Right ventricle myocardium superior (tissue), 1 donor: ENCODE measurements at regions of chr22 and their contacts with region 1.

Region 1: DNA sequence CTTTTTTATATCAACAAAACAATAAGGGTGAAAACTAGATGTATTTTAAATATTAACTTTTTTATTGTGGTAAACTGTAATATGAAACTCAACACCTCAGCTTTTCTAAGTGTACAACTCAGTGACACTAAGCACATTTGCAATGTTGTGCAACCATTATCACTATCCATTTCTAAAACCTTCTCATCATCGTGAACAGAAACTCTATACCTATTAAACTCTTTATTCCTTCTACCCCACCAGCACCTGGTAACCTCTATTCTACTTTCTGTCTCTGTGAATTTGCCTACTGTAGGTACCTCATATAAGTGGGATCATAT is 9.4 kb downstream of the HORMAD2 start:
- DNase-seq: no peak
- ATAC-seq: no peak

Region 2: GRCh38 chr22:29633514-29634312 is 455.9 kb before region 1 on chr22:
- intact Hi-C with region 1: loop called (anchors 5 kb)
- DNase-seq: no peak
- ATAC-seq: no peak

Region 3: DNA sequence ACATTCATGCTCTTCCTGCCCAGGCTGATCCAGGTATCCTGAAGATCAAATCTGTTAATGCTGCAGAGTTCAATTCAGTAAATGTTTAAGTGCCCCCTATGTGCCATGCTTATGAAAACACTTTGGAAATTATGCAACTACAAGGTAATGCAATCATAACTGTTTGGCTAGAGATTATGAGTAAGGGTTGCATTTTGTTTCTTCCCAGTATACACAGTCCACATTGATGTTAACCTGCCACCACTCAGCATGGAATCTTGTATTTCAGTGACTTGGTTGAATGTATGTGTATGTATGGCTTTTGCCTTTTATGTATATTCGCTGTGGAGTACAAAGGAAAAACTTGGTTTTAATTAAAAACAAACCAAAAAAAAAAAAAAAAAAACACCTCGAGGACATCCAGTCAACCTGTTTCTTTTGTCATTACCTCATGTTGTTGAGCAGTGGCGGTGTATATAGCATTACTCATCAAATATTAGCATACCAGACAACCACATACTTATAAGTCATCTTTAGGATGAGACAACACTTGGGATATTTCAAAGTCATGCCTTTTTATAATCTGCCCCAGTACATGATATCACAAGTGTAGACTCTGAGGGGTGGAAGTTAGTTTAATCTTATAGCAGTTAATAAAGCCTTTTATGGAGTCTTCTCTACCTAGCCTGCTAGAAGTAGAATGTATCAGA is 95.4 kb before region 1 on chr22:
- intact Hi-C with region 1: no loop called
- DNase-seq: no peak
- ATAC-seq: no peak

Region 4: GRCh38 chr22:30027169-30027568 is 62.4 kb before region 1 on chr22:
- intact Hi-C with region 1: no loop called
- DNase-seq: no peak
- ATAC-seq: peak; percentile 16